ENCODE measurements at regions of chr16 and their contacts with region 1.

Region 1: DNA sequence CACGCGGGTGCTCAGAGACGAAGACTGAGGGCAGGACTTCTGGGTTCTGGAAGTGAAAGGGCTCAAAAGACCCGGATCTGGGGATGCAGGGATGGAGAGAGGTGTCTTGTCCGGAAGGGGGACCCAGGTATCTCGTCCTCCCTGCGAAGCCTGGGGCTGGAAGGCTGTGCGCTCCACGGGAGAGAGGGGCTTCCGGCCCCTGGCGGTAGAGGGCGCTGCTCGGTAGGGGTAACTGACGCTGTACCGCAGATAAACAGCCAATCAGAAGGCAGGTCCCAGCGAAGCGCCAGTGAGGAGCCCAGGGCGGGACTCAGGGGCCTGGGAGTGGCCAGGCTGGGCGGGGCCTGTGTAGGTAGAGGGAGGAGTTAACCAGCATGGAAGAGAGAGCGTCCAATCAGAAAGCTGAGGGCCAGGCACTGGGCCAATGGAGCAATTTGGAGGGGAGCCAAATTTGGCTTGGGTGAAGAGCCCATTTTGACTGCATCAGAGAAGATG is 804 bp downstream of the TGFB1I1 start:
- DNase-seq: peak; percentile 98
- H3K4me3 ChIP-seq: peak overlapping the region; percentile 54 to 81
- H3K27ac ChIP-seq: peak overlapping the region; percentile 72 to 94
- H3K4me1 ChIP-seq: peaks cover 0 to 12% of the 10 kb centered on the region in 2 experiments; a peak in 1 of 4 replicates
- H3K27me3 ChIP-seq: no peaks in the 10 kb centered on the region
- CTCF ChIP-seq: peak; percentile 91
- EP300 ChIP-seq: no peak
- RAD21 ChIP-seq: no peak; the same call in 1 of the 2 replicates

Region 2: DNA sequence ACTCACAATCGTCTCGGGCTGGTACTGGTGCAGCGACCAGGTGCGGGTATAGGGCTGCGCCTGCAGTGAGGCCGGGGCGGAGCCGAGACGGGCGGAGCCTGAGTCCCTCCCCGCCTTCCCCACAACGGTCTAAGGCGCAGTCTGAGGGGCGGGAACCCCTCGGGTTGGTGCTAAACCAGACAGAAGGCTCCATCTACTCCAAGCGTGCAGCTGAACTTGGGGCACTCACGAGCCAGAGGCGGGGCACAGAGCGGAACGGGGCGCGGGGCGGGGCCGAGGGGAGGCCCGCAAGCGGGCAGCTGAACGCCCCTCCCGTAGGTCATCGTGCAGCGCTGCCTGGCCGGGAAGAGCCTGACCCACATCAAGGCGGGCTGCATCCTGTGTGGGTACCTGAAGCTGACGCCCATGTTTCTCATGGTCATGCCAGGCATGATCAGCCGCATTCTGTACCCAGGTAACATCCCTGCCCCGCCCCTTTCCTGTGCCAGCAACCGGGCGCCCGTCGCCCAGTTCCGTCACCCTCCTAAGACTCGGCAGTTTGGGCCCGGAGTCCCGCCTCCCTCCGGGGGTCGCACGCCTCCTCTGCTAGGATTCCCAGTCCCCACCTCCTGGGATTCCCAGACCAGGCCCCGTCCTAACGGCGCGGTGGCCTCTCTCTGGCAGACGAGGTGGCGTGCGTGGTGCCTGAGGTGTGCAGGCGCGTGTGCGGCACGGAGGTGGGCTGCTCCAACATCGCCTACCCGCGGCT is 15.1 kb after region 1 on chr16:
- CTCF ChIA-PET with region 1: interaction called, 10 read pairs
- POLR2A ChIA-PET with region 1: interaction called, 6 read pairs
- DNase-seq: peak; percentile 91
- H3K4me3 ChIP-seq: peak overlapping the region; percentile 50 to 57
- H3K27ac ChIP-seq: no peak overlapping the region
- H3K4me1 ChIP-seq: peaks cover 0 to 16% of the 10 kb centered on the region in 2 experiments; a peak in 1 of 4 replicates
- H3K27me3 ChIP-seq: no peaks in the 10 kb centered on the region
- CTCF ChIP-seq: no peak
- EP300 ChIP-seq: no peak
- RAD21 ChIP-seq: no peak

Measured in SK-N-SH (cell line).